Psoas muscle (tissue), 8 donors: ENCODE measurements at regions of chrX and their contacts with region 1.

Region 1: DNA sequence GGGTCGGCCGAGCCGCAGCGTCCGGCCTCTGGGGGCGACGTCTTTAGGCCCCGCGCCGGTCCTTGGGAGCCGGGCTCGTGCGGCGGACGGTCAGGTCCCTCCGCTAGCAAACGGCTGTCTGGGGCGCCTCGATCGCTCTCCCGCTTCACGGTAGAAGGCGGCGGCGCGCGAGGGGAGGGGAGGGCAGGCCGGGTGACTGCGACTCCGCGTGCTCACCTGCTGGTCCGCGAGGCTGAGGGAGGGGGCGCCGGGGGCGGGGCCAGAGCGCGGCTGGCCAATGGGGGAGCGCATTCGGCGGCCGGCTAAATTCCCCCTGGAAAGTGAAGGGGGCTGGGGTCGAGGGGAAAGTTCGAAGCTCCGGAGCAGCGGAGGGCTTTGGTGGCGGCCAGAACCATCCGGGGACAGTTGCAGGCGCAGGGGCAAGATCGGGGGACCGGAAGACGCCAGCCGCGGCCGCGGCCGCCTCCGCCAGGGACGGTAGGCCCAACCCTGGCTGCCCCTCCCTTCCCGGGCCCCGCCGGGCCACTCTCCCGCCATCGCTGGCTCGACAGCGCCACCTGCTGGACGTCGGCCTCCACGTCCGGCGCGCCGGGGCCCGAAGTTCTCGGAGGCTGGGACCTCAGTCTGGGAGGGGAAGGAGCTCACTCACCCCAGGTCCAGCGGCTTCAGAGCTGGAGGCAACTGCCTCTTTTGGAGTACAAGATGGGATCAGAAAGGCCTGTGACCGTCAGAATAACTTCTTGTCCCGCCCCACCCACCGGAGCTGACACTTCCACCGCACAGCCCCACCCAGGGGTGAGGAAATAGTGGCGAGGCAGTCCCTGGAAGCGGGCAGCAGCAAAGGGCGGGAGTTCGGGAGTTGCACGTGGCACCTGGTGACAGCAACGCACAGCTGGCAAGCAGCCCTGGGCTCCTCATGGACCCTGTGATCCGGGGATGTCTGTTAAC is 49.9 kb downstream of the ELF4 start:
- DNase-seq: peak; percentile 81 to 90
- ATAC-seq: peak; percentile 92 to 97 (median 93)
- H3K4me3 ChIP-seq: peak overlapping the region; percentile 65
- H3K27ac ChIP-seq: peak overlapping the region; percentile 46
- H3K4me1 ChIP-seq: no peaks in the 10 kb centered on the region
- H3K27me3 ChIP-seq: peaks cover 0 to 8% (median 0%) of the 10 kb centered on the region in 3 donors
- CTCF ChIP-seq: peak; percentile 88

Region 2: GRCh38 chrX:129600981-129601424 is 459.4 kb before region 1 on chrX:
- intact Hi-C with region 1: loop called (anchors 5 to 10 kb)
- DNase-seq: no peak
- ATAC-seq: peak; percentile 16 to 55 (median 44)
- H3K4me3 ChIP-seq: no peak overlapping the region
- H3K27ac ChIP-seq: no peak overlapping the region
- H3K4me1 ChIP-seq: no peaks in the 10 kb centered on the region
- H3K27me3 ChIP-seq: peaks cover 0 to 4% (median 0%) of the 10 kb centered on the region in 3 donors
- CTCF ChIP-seq: peak; percentile 55

Region 3: GRCh38 chrX:129925305-129926092 is 134.9 kb before region 1 on chrX:
- intact Hi-C with region 1: loop called in 1 of 2 experiments (anchors 2 kb)
- DNase-seq: peak; percentile 43 to 70
- ATAC-seq: peak; percentile 68 to 93 (median 78)
- H3K4me3 ChIP-seq: no peak overlapping the region
- H3K27ac ChIP-seq: no peak overlapping the region
- H3K4me1 ChIP-seq: no peaks in the 10 kb centered on the region
- H3K27me3 ChIP-seq: no peaks in the 10 kb centered on the region
- CTCF ChIP-seq: peak; percentile 61